ENCODE measurements at regions of chr18 and their contacts with region 1.

Region 1: DNA sequence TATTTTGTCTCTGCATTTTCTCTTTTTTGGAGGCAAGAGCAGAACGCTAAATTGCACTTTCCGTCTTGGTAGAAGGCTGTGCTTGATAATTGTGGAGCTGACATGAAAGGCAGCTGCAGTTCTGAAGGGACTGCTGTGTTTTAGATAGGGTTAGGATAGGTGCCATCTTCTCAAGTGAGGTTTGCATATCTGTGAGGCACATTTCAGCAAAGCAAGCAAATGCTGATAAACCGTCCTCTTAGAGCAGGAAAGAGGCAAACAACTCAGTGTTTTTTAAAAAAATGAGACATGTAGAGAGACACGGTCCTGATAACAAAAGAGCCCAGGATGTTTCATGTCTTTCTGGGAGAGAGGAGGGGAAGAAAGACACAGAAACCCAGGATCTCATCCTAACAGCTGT is 217.7 kb downstream of the SOCS6 start:
- DNase-seq: no peak
- ATAC-seq: no peak
- H3K4me3 ChIP-seq: no peak overlapping the region
- H3K27ac ChIP-seq: no peak overlapping the region
- H3K4me1 ChIP-seq: no peaks in the 10 kb centered on the region
- CTCF ChIP-seq: no peak
- EP300 ChIP-seq: no peak
- POLR2A ChIP-seq: no peak
- RAD21 ChIP-seq: no peak

Region 2: GRCh38 chr18:70491734-70492348 is 14.7 kb before region 1 on chr18:
- CTCF ChIA-PET with region 1: interaction called, 30 read pairs
- POLR2A ChIA-PET with region 1: no interaction called
- DNase-seq: peak; percentile 28 to 61
- ATAC-seq: peak; percentile 86 to 94
- H3K4me3 ChIP-seq: no peak overlapping the region
- H3K27ac ChIP-seq: no peak overlapping the region
- H3K4me1 ChIP-seq: no peaks in the 10 kb centered on the region
- CTCF ChIP-seq: peak; percentile 83
- EP300 ChIP-seq: no peak
- POLR2A ChIP-seq: no peak
- RAD21 ChIP-seq: peak; percentile 64 to 70

Region 3: GRCh38 chr18:70523035-70523791 is 16.7 kb after region 1 on chr18:
- CTCF ChIA-PET with region 1: no interaction called
- POLR2A ChIA-PET with region 1: no interaction called
- DNase-seq: no peak
- ATAC-seq: no peak
- H3K4me3 ChIP-seq: no peak overlapping the region
- H3K27ac ChIP-seq: no peak overlapping the region
- H3K4me1 ChIP-seq: no peaks in the 10 kb centered on the region
- CTCF ChIP-seq: no peak
- EP300 ChIP-seq: no peak
- POLR2A ChIP-seq: no peak
- RAD21 ChIP-seq: no peak